K562 (cell line): ENCODE measurements at regions of chr16 and their contacts with region 1.

Region 1: GRCh38 chr16:30922960-30923535 is 324 bp upstream of the FBXL19 start:
- DNase-seq: peak; percentile 89 to 100 (median 92)
- ATAC-seq: peak; percentile 87
- H3K4me3 ChIP-seq: peak overlapping the region; percentile 85
- H3K27ac ChIP-seq: peak overlapping the region; percentile 100
- H3K4me1 ChIP-seq: peaks cover 3 to 50% of the 10 kb centered on the region in 2 experiments; a peak in 4 of 5 replicates
- H3K27me3 ChIP-seq: no peaks in the 10 kb centered on the region; a peak in 1 of 5 replicates
- CTCF ChIP-seq: no peak
- EP300 ChIP-seq: no peak
- POLR2A ChIP-seq: peak; percentile 80
- RAD21 ChIP-seq: no peak

Region 2: DNA sequence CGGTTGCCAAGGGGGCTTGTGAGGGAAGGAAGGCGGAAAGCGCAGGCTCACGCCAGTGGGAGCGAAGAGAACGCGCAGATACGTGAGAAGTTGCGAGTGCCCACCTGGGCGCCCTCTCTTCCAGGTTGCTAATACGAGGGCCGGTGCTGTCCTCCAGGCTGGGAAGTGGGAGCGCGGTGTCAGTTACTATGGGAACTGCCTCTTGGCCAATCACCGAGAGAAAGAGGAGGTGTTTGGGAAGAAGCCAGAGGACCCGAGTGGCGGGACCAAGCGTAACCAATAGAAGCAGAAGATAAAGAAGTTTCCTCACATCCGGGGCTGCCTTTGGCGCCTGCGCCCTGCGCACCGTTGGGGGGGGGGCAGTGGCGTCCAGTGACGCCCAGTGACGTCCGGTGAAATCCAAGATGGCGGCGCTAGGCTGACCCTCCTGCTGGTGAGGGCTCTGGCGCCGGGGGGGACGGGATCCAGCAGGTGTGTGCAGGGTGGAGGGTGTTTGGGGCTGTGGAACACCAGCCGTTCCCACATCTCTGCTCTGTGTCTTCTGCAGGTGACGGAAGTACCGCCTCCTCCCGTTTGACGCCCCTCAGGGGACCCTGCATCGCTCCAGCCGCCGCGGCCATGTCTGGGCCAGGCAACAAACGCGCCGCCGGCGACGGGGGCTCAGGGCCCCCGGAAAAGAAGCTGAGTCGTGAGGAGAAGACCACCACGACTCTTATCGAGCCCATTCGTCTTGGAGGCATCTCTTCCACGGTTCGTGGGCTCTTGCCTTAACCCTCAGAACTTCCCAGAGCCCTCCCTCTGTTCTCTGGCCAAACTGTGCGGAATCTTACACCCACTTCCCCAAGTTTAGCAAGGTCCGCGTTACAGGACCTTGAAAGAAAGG is 160.9 kb before region 1 on chr16 and contains the starts of genes CFAP119 and RNF40:
- CTCF ChIA-PET with region 1: no interaction called
- POLR2A ChIA-PET with region 1: interaction called, 3 read pairs
- in situ Hi-C with region 1: no loop called
- intact Hi-C with region 1: loop called (anchors 2 kb)
- DNase-seq: peak; percentile 96 to 100 (median 98)
- ATAC-seq: peak; percentile 94
- H3K4me3 ChIP-seq: peak within 1 kb of the TSS; percentile 88
- H3K27ac ChIP-seq: peak within 1 kb of the TSS; percentile 87
- H3K4me1 ChIP-seq: peaks cover 19 to 51% of the 10 kb centered on the region in 2 experiments; a peak in 4 of 5 replicates
- H3K27me3 ChIP-seq: no peaks in the 10 kb centered on the region
- CTCF ChIP-seq: no peak
- EP300 ChIP-seq: no peak
- POLR2A ChIP-seq: peak; percentile 86
- RAD21 ChIP-seq: no peak
- polyA plus RNA-seq, gene CFAP119: 5.5 to 6.2 TPM
- polyA plus RNA-seq, gene RNF40: 6.2 to 9.1 TPM

Region 3: GRCh38 chr16:30813821-30814189 is 109.2 kb before region 1 on chr16:
- CTCF ChIA-PET with region 1: no interaction called
- POLR2A ChIA-PET with region 1: interaction called, 3 read pairs
- in situ Hi-C with region 1: no loop called
- intact Hi-C with region 1: loop called (anchors 1 kb)
- DNase-seq: no peak
- ATAC-seq: no peak
- H3K4me3 ChIP-seq: peak overlapping the region; percentile 41
- H3K27ac ChIP-seq: peak overlapping the region; percentile 69
- H3K4me1 ChIP-seq: peaks cover 16% of the 10 kb centered on the region in 2 experiments
- H3K27me3 ChIP-seq: no peaks in the 10 kb centered on the region
- CTCF ChIP-seq: no peak
- EP300 ChIP-seq: no peak
- POLR2A ChIP-seq: no peak
- RAD21 ChIP-seq: no peak

Region 4: GRCh38 chr16:30874821-30875717 is 48.0 kb before region 1 on chr16:
- CTCF ChIA-PET with region 1: no interaction called
- POLR2A ChIA-PET with region 1: interaction called, 3 read pairs
- in situ Hi-C with region 1: no loop called
- intact Hi-C with region 1: loop called (anchors 5 kb)
- DNase-seq: peak; percentile 83 to 96 (median 88)
- ATAC-seq: peak; percentile 94
- H3K4me3 ChIP-seq: peak overlapping the region; percentile 77
- H3K27ac ChIP-seq: peak overlapping the region; percentile 88
- H3K4me1 ChIP-seq: peaks cover 13 to 36% of the 10 kb centered on the region in 2 experiments
- H3K27me3 ChIP-seq: no peaks in the 10 kb centered on the region
- CTCF ChIP-seq: peak in 2 of 3 experiments; percentile 5 to 32; a peak in 2 of 6 replicates
- EP300 ChIP-seq: peak; percentile 36; the same call in 1 of the 2 replicates
- POLR2A ChIP-seq: peak; percentile 97
- RAD21 ChIP-seq: peak in 1 of 2 experiments; percentile 6; a peak in 1 of 4 replicates